ENCODE measurements at regions of chr2 and their contacts with region 1.

Region 1: DNA sequence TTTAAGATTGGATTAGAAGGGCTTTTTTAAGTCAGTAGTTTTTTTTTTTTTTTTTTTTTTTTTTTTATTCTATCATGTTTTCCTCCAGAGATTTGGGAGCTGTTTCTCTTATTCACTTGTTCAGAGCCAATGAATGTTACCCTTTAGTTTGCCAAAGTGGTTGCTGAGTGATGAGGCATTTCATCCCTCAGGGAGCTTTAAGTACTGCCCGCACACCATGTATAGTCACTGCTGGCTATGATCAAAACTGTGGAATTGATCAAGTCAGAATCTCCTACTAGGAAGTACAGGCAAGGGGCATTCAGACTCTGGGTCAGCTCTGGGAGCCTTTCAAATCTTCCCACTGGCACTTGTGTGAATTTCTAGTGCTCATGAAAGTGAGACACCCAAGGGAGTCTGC is 201.6 kb downstream of the IKZF2 start:
- DNase-seq: no peak
- ATAC-seq: no peak
- H3K4me3 Mint-ChIP-seq: no peak overlapping the region
- H3K27ac Mint-ChIP-seq: no peak overlapping the region
- H3K4me1 Mint-ChIP-seq: no peaks in the 10 kb centered on the region
- H3K27me3 Mint-ChIP-seq: no peaks in the 10 kb centered on the region
- CTCF ChIP-seq: no peak

Region 2: GRCh38 chr2:212659441-212659840 is 290.3 kb before region 1 on chr2:
- CTCF ChIA-PET with region 1: no interaction called
- POLR2A ChIA-PET with region 1: no interaction called
- intact Hi-C with region 1: no loop called
- DNase-seq: no peak
- ATAC-seq: no peak
- H3K4me3 Mint-ChIP-seq: no peak overlapping the region
- H3K27ac Mint-ChIP-seq: no peak overlapping the region
- H3K4me1 Mint-ChIP-seq: no peaks in the 10 kb centered on the region
- H3K27me3 Mint-ChIP-seq: peaks cover 4% of the 10 kb centered on the region
- CTCF ChIP-seq: no peak

Region 3: DNA sequence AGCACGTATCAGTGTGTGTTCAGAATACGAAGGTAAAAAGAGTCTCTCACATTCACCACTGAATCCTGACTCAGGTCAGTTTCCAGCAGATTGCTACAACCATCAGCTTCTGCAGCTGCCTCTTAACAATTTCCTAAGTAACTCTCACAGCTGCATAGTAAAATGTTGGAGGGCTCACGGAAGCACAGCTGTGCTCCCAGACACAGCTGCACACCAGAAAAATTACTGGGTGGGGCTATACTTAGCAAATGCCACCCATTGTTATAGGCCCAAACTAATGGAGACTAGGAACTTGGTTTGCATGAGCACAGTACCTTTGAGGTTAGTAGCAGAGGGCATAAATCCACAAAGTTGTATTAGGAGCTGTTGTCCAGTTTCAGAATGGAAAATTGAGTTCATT is 257.3 kb before region 1 on chr2:
- CTCF ChIA-PET with region 1: no interaction called
- POLR2A ChIA-PET with region 1: no interaction called
- intact Hi-C with region 1: no loop called
- DNase-seq: no peak
- ATAC-seq: no peak
- H3K4me3 Mint-ChIP-seq: no peak overlapping the region
- H3K27ac Mint-ChIP-seq: no peak overlapping the region
- H3K4me1 Mint-ChIP-seq: no peaks in the 10 kb centered on the region
- H3K27me3 Mint-ChIP-seq: peaks cover 4% of the 10 kb centered on the region
- CTCF ChIP-seq: no peak

Region 4: DNA sequence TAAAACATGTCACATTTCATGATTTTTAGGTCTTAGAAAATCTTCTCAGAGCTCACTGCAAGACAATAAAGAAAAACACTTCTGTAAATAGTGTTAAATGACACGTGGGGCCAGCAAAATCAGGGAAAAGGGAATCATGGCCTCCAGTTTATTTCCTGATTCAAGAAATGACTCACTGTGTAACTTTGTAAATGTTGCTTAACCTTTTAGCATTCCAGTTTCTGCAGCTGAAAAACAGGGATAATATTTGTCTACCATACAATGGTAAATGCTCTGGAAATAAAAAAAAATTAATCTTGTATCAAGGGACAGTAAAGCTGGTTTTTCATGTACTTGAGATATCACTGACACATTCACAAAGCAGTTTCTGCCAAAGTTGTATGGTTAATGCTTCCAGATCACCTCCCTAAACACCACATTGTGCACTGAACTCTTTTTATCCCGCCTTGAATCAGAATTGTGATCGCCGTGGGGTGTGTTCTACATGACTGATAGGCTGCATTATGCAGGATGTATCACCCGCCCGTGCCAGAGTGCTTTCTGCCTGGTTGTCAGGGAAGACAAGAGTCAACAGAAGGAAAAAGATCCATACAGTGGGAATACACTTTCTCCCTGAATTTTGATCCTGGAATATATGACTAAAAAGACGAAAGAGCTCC is 37.2 kb before region 1 on chr2:
- CTCF ChIA-PET with region 1: no interaction called
- POLR2A ChIA-PET with region 1: no interaction called
- intact Hi-C with region 1: no loop called
- DNase-seq: no peak
- ATAC-seq: no peak
- H3K4me3 Mint-ChIP-seq: no peak overlapping the region
- H3K27ac Mint-ChIP-seq: no peak overlapping the region
- H3K4me1 Mint-ChIP-seq: peaks cover 11% of the 10 kb centered on the region
- H3K27me3 Mint-ChIP-seq: no peaks in the 10 kb centered on the region
- CTCF ChIP-seq: no peak

Region 5: DNA sequence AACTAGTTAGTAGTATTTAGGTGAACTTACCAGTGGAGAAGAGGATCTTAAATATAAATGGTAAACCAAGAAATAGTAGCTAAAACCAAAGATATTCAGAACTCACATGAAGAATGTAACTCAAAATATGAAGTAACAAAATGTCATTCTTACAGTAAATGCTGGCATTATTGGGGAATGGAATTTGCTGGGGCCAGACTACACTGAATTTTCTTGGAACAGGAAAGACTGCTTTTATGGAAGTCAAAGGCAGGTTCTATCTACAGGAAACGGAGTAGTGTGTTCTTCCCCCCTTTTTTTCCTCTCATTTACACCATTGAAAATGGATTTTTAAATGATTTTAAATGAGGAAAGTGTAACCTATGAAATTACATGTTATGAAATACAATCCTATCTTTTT is 12.9 kb after region 1 on chr2:
- CTCF ChIA-PET with region 1: no interaction called
- POLR2A ChIA-PET with region 1: no interaction called
- intact Hi-C with region 1: loop called (anchors 2 kb)
- DNase-seq: no peak
- ATAC-seq: no peak
- H3K4me3 Mint-ChIP-seq: no peak overlapping the region
- H3K27ac Mint-ChIP-seq: no peak overlapping the region
- H3K4me1 Mint-ChIP-seq: peaks cover 14% of the 10 kb centered on the region
- H3K27me3 Mint-ChIP-seq: no peaks in the 10 kb centered on the region
- CTCF ChIP-seq: no peak